Calu3 (cell line): ENCODE measurements at regions of chr22 and their contacts with region 1.

Region 1: DNA sequence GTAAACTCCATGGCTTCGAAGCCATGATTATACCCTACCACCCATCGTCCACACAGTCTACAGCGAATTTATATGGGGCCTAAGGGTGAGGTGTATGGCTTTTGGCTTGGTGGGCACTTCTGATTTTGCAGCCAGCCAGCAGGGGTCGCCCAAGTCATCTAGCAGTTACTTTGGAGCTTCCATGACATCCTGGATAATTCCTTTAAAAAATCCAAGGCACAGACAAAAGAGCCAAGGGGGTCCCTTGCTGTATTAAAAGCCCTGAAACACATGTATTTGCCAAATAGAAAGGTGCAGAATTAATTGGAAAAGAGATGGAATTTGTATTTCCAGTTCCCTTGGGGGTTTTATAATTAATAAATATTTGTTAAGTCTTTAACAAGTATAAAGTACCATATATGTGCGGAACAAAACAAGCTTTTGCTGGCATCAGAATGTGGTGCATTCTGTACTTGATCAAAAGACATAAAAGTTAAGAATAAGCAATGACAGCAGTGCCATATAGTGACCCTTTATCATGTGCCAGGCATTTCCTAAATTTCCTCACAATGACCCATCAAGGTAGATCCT is 132.8 kb upstream of the PITPNB start:
- DNase-seq: peak; percentile 77
- H3K4me3 Mint-ChIP-seq: no peak overlapping the region
- H3K27ac Mint-ChIP-seq: no peak overlapping the region
- H3K4me1 Mint-ChIP-seq: no peaks in the 10 kb centered on the region
- H3K27me3 Mint-ChIP-seq: peaks cover 53% of the 10 kb centered on the region
- CTCF ChIP-seq: peak; percentile 91

Region 2: GRCh38 chr22:27740192-27740748 is 311.6 kb before region 1 on chr22:
- CTCF ChIA-PET with region 1: no interaction called
- intact Hi-C with region 1: no loop called
- DNase-seq: no peak
- H3K4me3 Mint-ChIP-seq: no peak overlapping the region
- H3K27ac Mint-ChIP-seq: no peak overlapping the region
- H3K4me1 Mint-ChIP-seq: no peaks in the 10 kb centered on the region
- H3K27me3 Mint-ChIP-seq: peaks cover 36% of the 10 kb centered on the region
- CTCF ChIP-seq: no peak

Region 3: GRCh38 chr22:28034760-28035401 is 17.0 kb before region 1 on chr22:
- CTCF ChIA-PET with region 1: no interaction called
- intact Hi-C with region 1: no loop called
- DNase-seq: no peak
- H3K4me3 Mint-ChIP-seq: no peak overlapping the region
- H3K27ac Mint-ChIP-seq: no peak overlapping the region
- H3K4me1 Mint-ChIP-seq: no peaks in the 10 kb centered on the region
- H3K27me3 Mint-ChIP-seq: peaks cover 45% of the 10 kb centered on the region
- CTCF ChIP-seq: no peak

Region 4: GRCh38 chr22:28072066-28072465 is 20.2 kb after region 1 on chr22:
- CTCF ChIA-PET with region 1: no interaction called
- intact Hi-C with region 1: no loop called
- DNase-seq: no peak
- H3K4me3 Mint-ChIP-seq: no peak overlapping the region
- H3K27ac Mint-ChIP-seq: no peak overlapping the region
- H3K4me1 Mint-ChIP-seq: peaks cover 21% of the 10 kb centered on the region
- H3K27me3 Mint-ChIP-seq: peaks cover 24% of the 10 kb centered on the region
- CTCF ChIP-seq: no peak

Region 5: GRCh38 chr22:28112548-28113043 is 60.7 kb after region 1 on chr22:
- CTCF ChIA-PET with region 1: interaction called, 17 read pairs
- intact Hi-C with region 1: loop called (anchors 1 kb)
- DNase-seq: peak; percentile 32
- H3K4me3 Mint-ChIP-seq: no peak overlapping the region
- H3K27ac Mint-ChIP-seq: no peak overlapping the region
- H3K4me1 Mint-ChIP-seq: peaks cover 8% of the 10 kb centered on the region
- H3K27me3 Mint-ChIP-seq: peaks cover 34% of the 10 kb centered on the region
- CTCF ChIP-seq: peak; percentile 39